ENCODE measurements at regions of chr16 and their contacts with region 1.

Region 1: DNA sequence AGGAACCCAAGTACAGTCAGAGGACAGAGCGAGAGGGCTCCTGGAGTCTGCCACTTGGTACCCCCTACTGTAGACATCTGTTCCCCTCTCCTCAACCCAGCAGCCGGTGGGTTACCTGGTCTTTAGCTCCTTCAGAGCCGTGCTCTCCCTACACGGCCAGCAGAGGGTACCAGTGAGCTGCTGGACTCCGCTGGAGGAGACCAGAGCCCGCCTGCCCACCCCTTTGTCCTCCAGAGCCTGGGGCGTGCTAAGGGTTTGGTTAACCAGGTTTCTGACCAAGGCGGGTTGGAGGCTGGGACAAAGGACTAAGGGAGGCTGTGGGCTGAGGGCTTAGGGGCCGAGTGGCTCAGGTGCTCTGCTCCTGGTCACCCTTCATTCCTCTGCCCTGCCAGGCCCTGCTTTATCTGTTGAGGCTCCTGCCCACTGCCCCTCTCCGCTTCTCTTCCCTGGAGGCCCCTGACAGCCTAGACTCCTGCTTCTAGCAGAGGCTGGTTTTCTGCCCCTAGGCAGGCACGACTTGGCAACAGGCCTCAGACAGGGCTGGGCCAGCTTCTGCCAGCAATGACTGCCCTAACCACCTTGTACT is 2.7 kb upstream of the HSD11B2 start:
- DNase-seq: peak in 1 of 2 donors; percentile 64
- ATAC-seq: peak; percentile 61 to 66
- H3K4me3 ChIP-seq: no peak overlapping the region
- H3K27ac ChIP-seq: no peak overlapping the region
- H3K4me1 ChIP-seq: peaks cover 11 to 16% of the 10 kb centered on the region in 2 donors
- H3K27me3 ChIP-seq: peaks cover 0 to 6% (median 0%) of the 10 kb centered on the region in 3 donors
- CTCF ChIP-seq: peak; percentile 85 to 90 (median 87)
- POLR2A ChIP-seq: no peak

Region 2: DNA sequence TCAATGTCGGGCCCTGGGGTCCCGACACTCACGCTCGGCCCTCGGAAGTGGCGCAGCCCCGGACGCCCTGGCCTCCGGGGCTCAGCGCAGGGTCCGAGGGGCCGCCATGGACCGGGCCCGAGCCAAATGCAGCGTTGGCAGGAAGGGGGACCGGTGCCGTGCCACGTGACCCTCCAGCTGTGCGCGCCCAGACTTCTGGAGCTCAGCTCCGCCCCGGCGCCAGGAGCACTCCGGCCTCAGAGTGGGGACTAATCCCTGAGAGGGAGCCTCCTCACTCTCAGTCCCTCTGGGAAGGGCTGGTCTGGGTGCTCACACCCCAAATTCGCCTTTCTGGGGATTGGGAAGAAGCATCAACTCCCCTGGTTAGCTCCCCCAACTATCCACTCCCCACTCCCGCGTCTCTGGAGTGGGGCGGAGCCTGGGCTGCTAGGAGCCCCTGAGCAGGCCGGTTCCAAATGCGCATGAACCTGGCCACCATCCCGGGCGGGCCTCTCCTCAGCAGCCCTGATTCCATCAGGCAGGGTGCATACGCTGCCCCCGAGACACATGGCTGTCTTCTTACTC is 277.3 kb before region 1 on chr16 and contains the start of gene B3GNT9:
- in situ Hi-C with region 1: no loop called
- intact Hi-C with region 1: no loop called
- DNase-seq: no peak
- ATAC-seq: peak in 1 of 2 donors; percentile 33
- H3K4me3 ChIP-seq: peak within 1 kb of the TSS; percentile 60 to 82 (median 67)
- H3K27ac ChIP-seq: peak within 1 kb of the TSS; percentile 54 to 76 (median 70)
- H3K4me1 ChIP-seq: peaks cover 7 to 19% of the 10 kb centered on the region in 2 donors
- H3K27me3 ChIP-seq: peaks cover 3 to 12% (median 4%) of the 10 kb centered on the region in 3 donors
- CTCF ChIP-seq: no peak
- POLR2A ChIP-seq: peak in 1 of 2 donors; percentile 11
- total RNA-seq, gene B3GNT9: 1.5 to 3.1 (median 2.6) TPM

Region 3: GRCh38 chr16:67445913-67446907 is 18.0 kb after region 1 on chr16:
- in situ Hi-C with region 1: no loop called
- intact Hi-C with region 1: loop called (anchors 2 kb)
- DNase-seq: no peak
- ATAC-seq: no peak
- H3K4me3 ChIP-seq: no peak overlapping the region
- H3K27ac ChIP-seq: peak overlapping the region in 2 of 4 donors; percentile 2 to 19
- H3K4me1 ChIP-seq: peaks cover 95 to 100% of the 10 kb centered on the region in 2 donors
- H3K27me3 ChIP-seq: no peaks in the 10 kb centered on the region
- CTCF ChIP-seq: no peak
- POLR2A ChIP-seq: no peak

Region 4: GRCh38 chr16:67470359-67470758 is 42.1 kb after region 1 on chr16:
- in situ Hi-C with region 1: no loop called
- intact Hi-C with region 1: loop called (anchors 1 kb)
- DNase-seq: peak; percentile 96 to 99
- ATAC-seq: peak; percentile 98
- H3K4me3 ChIP-seq: no peak overlapping the region
- H3K27ac ChIP-seq: peak overlapping the region; percentile 51 to 74 (median 68)
- H3K4me1 ChIP-seq: peaks cover 52 to 76% of the 10 kb centered on the region in 2 donors
- H3K27me3 ChIP-seq: no peaks in the 10 kb centered on the region
- CTCF ChIP-seq: no peak
- POLR2A ChIP-seq: no peak

Measured in gastrocnemius medialis (tissue), 4 donors.